Activated CD8-positive, alpha-beta memory T cell treated with anti-CD3 and anti-CD28 coated beads, Interleukin-2, amount 10 ng/mL, durations not matched to agents 7 days and 5 days (primary cell): ENCODE measurements at regions of chr1 and their contacts with region 1.

Region 1: DNA sequence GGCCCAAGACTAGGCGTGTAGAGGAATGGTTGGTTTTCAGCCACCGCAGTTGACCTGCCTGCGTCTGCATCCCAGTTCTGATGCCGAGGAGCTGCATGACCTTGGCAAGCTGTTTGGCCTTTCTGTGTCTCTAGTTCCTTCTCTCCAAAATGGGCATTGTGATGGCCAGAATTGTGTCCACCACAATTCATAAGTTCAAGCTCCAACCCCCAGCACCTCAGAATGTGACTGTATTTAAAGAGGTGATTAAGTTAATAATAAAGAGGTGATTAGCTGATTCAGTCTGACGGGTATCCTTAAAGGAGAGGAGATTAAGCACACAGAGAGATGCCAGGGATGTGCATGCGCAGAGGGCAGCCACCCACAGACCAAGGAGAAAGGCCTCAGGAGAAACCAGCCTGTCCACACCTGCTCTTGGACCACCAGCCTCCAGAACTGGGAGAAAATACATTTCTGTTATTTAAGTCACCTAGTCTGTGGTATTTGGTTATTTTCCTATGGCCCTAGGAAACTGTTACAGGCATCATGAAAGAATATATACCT is 28.5 kb downstream of the MAB21L3 start:
- DNase-seq: no peak
- ATAC-seq: no peak
- H3K4me3 Mint-ChIP-seq: no peak overlapping the region
- H3K27ac Mint-ChIP-seq: no peak overlapping the region
- H3K4me1 Mint-ChIP-seq: peaks cover 8% of the 10 kb centered on the region
- H3K27me3 Mint-ChIP-seq: peaks cover 13% of the 10 kb centered on the region

Region 2: DNA sequence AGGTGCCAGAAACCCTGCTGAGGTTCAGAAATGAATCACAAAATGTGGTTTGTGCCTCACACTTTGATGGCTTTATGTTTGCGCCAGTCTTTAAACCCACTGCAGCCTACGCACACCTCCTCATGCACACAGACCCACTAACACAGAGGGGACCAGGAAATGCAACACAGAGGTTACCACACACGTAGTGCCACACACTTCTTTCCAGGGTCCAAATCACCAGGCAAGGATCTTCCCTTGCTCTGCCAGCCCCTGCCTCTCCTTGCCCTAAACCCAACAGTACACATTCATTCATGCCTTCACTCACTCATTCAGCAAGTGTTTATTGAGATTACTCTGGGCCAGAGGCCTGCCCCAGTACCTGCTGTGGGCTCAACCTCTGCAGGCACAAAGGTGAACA is 11.0 kb before region 1 on chr1:
- CTCF ChIA-PET with region 1: interaction called, 12 read pairs
- DNase-seq: peak; percentile 60
- ATAC-seq: peak; percentile 77
- H3K4me3 Mint-ChIP-seq: no peak overlapping the region
- H3K27ac Mint-ChIP-seq: no peak overlapping the region
- H3K4me1 Mint-ChIP-seq: peaks cover 34% of the 10 kb centered on the region
- H3K27me3 Mint-ChIP-seq: peaks cover 23% of the 10 kb centered on the region

Region 3: GRCh38 chr1:116168277-116169097 is 28.8 kb after region 1 on chr1:
- CTCF ChIA-PET with region 1: interaction called, 30 read pairs
- DNase-seq: peak; percentile 83
- ATAC-seq: peak; percentile 98
- H3K4me3 Mint-ChIP-seq: peak overlapping the region; percentile 61
- H3K27ac Mint-ChIP-seq: peak overlapping the region; percentile 39
- H3K4me1 Mint-ChIP-seq: peaks cover 6% of the 10 kb centered on the region
- H3K27me3 Mint-ChIP-seq: no peaks in the 10 kb centered on the region

Region 4: GRCh38 chr1:116418091-116418830 is 278.6 kb after region 1 on chr1:
- CTCF ChIA-PET with region 1: interaction called, 22 read pairs
- DNase-seq: peak; percentile 91
- ATAC-seq: peak; percentile 96
- H3K4me3 Mint-ChIP-seq: peak overlapping the region; percentile 91
- H3K27ac Mint-ChIP-seq: peak overlapping the region; percentile 90
- H3K4me1 Mint-ChIP-seq: peaks cover 57% of the 10 kb centered on the region
- H3K27me3 Mint-ChIP-seq: no peaks in the 10 kb centered on the region

Region 5: GRCh38 chr1:116498789-116499628 is 359.3 kb after region 1 on chr1:
- CTCF ChIA-PET with region 1: interaction called, 115 read pairs
- DNase-seq: peak; percentile 70
- ATAC-seq: peak; percentile 73
- H3K4me3 Mint-ChIP-seq: no peak overlapping the region
- H3K27ac Mint-ChIP-seq: no peak overlapping the region
- H3K4me1 Mint-ChIP-seq: peaks cover 44% of the 10 kb centered on the region
- H3K27me3 Mint-ChIP-seq: no peaks in the 10 kb centered on the region

Region 6: DNA sequence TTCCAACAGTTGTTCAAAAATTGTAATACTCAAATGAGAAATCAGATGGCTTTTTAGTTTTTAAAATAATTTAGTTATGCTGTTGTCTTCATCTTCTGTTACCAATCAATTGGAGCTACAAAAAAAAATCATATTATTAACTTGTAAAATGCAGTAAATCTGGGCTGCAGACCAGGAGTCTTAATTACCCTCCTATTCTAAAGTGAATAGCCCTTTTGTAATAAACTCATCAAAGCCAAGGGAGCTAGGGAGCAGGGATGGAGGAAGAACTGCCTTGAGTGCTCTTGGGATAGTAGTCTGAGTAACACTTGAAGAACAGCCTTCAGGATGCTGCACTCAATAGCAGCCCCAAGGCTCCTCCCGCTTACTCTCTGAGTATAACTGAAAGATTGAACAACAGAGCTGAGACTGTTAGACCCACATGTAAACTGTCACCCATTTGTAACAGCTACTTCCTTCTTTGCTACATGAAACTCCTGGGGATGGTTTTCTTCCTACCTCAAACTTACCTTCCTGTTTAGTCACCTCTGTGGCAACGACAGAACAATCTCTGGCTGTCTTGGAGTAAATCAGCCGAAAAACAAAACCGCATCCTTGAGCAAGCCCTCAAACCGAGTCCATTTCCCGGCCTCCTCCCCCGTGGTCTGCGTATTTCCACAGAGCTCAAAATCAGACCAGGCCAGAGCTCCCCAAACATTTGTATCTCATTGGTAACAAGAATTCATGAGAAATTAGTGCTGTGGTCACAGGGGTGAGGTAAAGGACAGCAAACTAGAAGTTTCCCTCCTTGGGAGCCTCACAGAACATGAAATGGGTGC is 375.3 kb after region 1 on chr1:
- CTCF ChIA-PET with region 1: interaction called, 18 read pairs
- DNase-seq: peak; percentile 86
- ATAC-seq: peak; percentile 83
- H3K4me3 Mint-ChIP-seq: peak overlapping the region; percentile 39
- H3K27ac Mint-ChIP-seq: peak overlapping the region; percentile 93
- H3K4me1 Mint-ChIP-seq: peaks cover 77% of the 10 kb centered on the region
- H3K27me3 Mint-ChIP-seq: no peaks in the 10 kb centered on the region